ENCODE measurements at regions of chr10 and their contacts with region 1.

Region 1: GRCh38 chr10:60444494-60445064 is 54.9 kb upstream of the ANK3 start:
- DNase-seq: no peak
- H3K4me3 ChIP-seq: no peak overlapping the region
- CTCF ChIP-seq: peak; percentile 25

Region 2: GRCh38 chr10:60099998-60100747 is 344.4 kb before region 1 on chr10:
- CTCF ChIA-PET with region 1: interaction called, 72 read pairs
- POLR2A ChIA-PET with region 1: no interaction called
- DNase-seq: no peak
- H3K4me3 ChIP-seq: no peak overlapping the region
- CTCF ChIP-seq: peak; percentile 44

Region 3: DNA sequence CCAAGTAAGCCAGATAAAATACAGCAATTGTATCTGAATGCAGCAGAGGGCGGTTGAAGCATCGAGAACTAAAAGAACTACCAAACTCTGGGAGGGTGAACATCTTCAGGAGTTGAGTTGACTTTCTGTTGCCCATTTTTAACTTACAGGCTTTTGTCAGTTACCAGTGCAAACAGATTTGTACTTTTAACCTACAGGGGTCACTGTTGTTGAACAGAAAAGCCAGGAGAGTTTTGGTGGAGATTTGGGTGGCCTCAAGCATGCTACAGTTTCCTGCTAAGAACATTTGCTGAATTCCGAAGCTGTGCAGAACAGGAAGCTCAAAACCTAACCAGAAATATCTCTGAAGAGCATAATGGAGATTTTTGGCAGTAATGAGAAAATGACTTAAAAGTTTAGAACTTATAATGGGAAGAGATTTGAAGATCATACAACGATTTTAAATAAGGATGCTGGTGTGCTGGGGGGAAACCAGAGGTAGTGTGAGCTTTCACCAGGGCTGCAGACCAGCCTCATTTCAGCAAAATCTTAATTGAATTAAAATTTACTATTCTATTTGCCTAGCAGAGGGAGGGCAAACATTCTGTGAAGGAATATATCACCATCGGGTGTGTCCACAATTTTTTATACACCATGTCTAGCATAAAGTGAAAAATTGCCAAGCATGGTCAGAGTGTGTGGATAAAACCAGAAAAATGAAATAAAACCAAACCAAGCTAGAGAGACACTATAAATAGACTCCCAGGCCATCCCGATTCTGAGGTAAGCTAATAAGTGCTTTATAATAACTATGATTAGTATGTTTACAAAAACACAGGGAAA is 329.6 kb before region 1 on chr10:
- CTCF ChIA-PET with region 1: interaction called, 86 read pairs
- POLR2A ChIA-PET with region 1: no interaction called
- DNase-seq: peak; percentile 52
- H3K4me3 ChIP-seq: no peak overlapping the region
- CTCF ChIP-seq: peak; percentile 42

Region 4: DNA sequence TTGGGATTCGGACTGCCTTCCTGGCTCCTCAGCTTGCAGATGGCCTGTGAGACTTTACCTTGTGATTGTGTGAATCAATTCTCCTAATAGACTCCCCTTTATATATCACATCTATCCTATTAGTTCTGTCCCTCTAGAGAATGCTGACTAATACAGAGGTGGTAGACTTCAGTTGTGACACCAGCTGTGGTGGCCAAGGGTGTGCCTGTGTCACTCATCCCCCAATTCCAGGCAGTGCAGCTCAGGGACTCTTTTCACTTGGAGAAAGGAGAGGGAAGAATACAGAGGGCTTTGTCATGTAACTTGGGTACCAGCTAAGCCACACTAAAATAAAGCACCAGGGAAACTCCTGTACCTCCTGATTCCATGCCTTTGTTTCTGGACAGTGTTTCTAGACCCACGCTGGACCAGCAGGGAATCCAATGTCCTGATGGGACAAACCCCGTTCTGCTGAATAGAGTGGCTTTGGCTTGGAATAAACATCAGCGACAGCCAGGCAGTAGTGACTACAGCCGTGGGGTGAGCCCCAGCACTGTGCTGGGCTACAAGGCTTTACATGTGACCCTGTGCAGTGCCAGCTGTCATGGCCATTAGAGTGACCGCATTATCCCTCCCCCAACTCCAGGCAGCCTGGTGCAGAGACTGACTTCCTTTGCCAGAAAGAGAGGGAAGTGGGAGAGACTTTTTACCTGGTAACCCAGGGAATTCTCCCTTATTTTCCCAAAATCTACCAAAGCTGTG is 288.5 kb before region 1 on chr10:
- CTCF ChIA-PET with region 1: no interaction called
- POLR2A ChIA-PET with region 1: no interaction called
- DNase-seq: no peak
- H3K4me3 ChIP-seq: no peak overlapping the region
- CTCF ChIP-seq: no peak

Region 5: DNA sequence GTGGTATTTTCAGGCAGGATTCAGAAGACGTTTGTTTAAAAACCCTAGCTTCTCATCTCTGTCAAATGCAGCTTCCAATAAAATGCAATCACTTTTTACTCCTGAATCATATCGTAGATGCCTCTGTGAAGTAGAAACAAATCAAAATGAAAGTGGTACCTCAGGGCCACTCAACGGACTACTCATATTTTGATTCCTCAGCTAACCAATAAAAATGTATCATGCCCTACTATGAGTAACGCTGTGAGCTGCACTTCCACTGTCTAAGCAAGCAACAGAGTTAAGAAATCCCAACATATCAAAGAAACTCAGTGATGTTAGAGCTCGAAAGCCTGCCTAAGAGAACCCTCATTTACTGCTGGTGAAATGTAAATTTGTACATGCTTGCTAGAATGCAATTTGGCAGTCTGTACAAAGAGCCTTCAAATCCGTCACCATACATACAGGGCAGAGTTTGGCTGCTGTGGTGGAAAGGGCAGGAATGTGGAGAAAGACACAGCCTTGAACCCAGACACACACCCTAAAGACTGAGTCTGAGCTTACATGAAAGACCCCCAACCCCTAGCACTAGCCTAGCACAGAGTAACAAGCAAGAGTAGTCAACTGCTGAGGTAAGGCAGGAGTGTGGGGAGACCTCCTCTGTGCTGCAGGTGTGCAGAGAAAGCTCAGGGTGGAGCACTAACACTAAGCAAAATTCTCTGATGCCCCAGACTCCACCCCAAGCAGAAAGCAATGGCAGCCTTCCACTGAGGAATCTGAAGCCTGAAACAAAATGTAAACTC is 206.4 kb before region 1 on chr10:
- CTCF ChIA-PET with region 1: interaction called, 60 read pairs
- POLR2A ChIA-PET with region 1: no interaction called
- DNase-seq: no peak
- H3K4me3 ChIP-seq: no peak overlapping the region
- CTCF ChIP-seq: peak; percentile 41

Region 6: DNA sequence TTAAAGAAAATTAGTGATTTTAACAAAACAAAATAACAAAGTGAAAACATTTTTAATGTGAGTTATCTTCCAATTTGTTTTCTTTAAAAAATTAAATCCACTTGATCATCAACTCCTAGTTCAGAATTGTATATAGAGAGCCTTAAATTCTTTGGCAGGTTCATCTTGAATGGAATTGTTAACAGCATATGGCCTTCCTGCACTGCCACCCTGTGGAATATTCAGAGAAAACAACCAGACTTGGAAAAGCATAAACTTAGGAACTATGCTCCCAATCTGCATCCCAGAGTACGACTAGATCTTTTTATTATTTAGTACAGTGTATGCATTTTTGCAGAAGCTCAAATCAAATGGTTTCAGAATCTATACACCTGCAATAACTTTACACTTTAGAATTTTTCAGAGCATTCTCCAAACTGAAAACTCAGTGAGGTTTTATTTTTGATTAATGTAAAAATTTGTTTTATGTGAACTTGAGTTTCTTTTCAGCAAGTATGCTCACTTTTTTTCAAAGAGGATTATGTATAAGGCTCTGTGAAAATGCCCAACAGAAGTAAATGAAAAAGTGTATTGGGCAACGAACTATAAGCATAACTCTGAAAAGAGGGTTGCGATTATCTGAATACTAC is 10.0 kb before region 1 on chr10:
- CTCF ChIA-PET with region 1: interaction called, 20 read pairs
- POLR2A ChIA-PET with region 1: no interaction called
- DNase-seq: no peak
- H3K4me3 ChIP-seq: no peak overlapping the region
- CTCF ChIP-seq: peak; percentile 49

Region 7: DNA sequence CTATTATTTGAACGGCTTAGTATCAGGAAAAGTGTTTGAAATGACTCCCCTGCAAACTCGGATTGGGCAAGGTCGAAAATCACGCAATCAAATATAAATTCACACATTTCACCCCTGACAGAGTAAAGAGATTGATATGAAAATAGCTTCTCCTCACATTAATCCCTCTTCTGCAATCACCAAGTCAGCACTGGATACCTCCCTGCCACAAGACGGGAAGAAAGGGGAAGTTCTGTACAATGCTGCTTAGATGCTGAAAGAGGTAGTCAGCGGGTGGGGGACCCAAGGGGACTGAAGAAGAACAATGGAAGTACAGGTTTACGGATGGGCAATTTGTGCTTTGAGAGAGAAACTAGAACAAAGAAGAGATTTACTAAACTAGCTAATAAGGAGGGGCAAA is 17.1 kb after region 1 on chr10:
- CTCF ChIA-PET with region 1: interaction called, 15 read pairs
- POLR2A ChIA-PET with region 1: no interaction called
- DNase-seq: no peak
- H3K4me3 ChIP-seq: no peak overlapping the region
- CTCF ChIP-seq: no peak

Region 8: GRCh38 chr10:60508037-60508436 is 63.5 kb after region 1 on chr10:
- CTCF ChIA-PET with region 1: no interaction called
- POLR2A ChIA-PET with region 1: no interaction called
- DNase-seq: no peak
- H3K4me3 ChIP-seq: no peak overlapping the region
- CTCF ChIP-seq: no peak

Region 9: DNA sequence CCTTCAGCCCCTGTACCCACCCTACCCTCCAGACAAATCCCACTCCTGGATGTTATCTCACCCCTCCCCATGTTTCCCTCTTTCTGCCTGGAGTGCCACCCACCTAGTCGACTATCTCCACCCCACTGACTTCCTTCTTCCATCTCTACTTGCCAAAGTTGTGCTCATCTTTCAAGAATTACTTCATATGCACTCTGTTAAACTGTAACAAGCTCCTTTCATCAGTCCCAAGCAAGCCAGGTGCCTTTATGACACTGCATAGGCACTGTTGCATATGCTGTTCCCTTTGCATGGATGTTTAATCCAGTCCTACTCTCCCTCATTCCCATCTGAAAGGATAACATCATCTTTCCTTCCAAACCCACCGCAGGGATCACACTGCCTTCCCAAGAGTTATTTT is 324.8 kb after region 1 on chr10:
- CTCF ChIA-PET with region 1: interaction called, 87 read pairs
- POLR2A ChIA-PET with region 1: no interaction called
- DNase-seq: no peak
- H3K4me3 ChIP-seq: no peak overlapping the region
- CTCF ChIP-seq: no peak